GM10248 (cell line): ENCODE measurements at regions of chr11 and their contacts with region 1.

Region 1: GRCh38 chr11:87352759-87353707 is 315.3 kb downstream of the TMEM135 start:
- DNase-seq: peak; percentile 82
- CTCF ChIP-seq: peak; percentile 97

Region 2: GRCh38 chr11:87331273-87331672 is 21.8 kb before region 1 on chr11:
- CTCF ChIA-PET with region 1: interaction called, 16 read pairs
- POLR2A ChIA-PET with region 1: no interaction called
- DNase-seq: no peak
- CTCF ChIP-seq: no peak

Region 3: GRCh38 chr11:87338046-87338639 is 14.9 kb before region 1 on chr11:
- CTCF ChIA-PET with region 1: interaction called, 10 read pairs
- POLR2A ChIA-PET with region 1: no interaction called
- DNase-seq: no peak
- CTCF ChIP-seq: no peak

Region 4: DNA sequence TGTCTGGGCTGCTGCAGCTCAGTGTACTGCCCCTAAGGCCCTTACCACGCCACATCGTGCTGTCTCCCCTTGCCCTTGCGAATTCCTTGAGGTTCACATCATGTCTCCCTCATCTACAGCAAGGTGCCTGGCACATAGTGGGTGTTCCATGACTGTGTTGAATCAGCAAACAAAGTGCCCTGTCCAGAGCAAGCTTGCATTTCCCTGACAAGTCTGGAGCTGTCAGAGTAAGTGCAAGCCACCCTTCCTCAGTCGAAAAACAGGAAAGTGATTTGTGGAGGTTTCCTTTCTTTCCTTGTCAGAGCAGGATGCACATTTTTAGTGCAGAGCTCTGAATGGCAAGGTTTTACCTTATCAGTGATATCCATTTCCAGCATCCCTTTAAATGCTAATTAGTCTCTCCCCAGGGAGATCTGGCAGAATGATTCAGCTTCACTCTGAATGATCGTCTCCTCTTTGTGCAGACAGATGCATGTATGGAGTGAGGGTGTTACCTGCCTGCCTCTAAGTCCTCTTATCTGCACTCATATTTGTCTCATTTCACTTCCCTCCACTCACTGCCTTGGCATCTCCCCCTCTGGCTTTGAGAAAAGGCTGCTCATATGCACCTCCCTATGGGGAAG is 15.9 kb after region 1 on chr11:
- CTCF ChIA-PET with region 1: interaction called, 27 read pairs
- POLR2A ChIA-PET with region 1: no interaction called
- DNase-seq: no peak
- CTCF ChIP-seq: no peak